ENCODE measurements at regions of chr6 and their contacts with region 1.

Region 1: DNA sequence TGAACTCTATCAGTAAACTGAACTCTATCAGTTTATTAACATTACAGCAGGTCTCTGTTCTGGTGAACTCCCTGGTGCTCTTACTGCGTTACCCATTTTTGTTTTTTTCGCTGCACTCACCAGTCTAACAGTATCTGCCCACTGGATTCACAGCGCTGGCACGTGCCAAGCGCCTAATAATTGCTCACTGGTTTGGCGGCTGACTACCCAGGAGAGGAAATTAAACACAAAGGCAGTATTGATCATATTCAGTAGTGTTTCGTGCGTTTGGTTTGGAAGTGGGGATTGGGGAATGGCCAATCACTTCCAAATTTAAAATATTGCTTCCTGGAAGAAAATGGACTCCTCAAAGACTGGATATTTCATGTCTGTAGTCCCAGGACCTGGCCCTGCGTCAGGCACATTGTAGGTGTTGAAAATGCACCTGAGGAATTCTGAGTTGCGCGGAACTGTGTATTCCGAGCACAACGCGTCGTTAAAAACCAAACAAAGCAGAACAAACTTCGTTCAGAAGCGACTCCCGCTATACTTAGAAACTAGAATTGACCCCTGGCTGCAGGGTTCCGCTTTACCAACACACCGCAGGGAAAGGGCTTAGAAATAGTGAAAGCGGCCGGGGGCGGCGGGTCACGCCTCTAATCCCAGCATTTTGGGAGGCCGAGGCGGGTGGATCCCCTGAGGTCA is 1.1 kb upstream of the RPS12 start:
- DNase-seq: peak in 1 of 2 donors; percentile 74
- H3K4me3 ChIP-seq: peak overlapping the region; percentile 60 to 76
- H3K27ac ChIP-seq: peak overlapping the region; percentile 54 to 56
- H3K4me1 ChIP-seq: peaks cover 10 to 20% of the 10 kb centered on the region in 2 donors
- H3K27me3 ChIP-seq: no peaks in the 10 kb centered on the region
- CTCF ChIP-seq: no peak

Region 2: GRCh38 chr6:132907914-132908313 is 94.6 kb after region 1 on chr6:
- intact Hi-C with region 1: no loop called
- DNase-seq: no peak
- H3K4me3 ChIP-seq: no peak overlapping the region
- H3K27ac ChIP-seq: no peak overlapping the region
- H3K4me1 ChIP-seq: no peaks in the 10 kb centered on the region
- H3K27me3 ChIP-seq: no peaks in the 10 kb centered on the region
- CTCF ChIP-seq: no peak

Region 3: DNA sequence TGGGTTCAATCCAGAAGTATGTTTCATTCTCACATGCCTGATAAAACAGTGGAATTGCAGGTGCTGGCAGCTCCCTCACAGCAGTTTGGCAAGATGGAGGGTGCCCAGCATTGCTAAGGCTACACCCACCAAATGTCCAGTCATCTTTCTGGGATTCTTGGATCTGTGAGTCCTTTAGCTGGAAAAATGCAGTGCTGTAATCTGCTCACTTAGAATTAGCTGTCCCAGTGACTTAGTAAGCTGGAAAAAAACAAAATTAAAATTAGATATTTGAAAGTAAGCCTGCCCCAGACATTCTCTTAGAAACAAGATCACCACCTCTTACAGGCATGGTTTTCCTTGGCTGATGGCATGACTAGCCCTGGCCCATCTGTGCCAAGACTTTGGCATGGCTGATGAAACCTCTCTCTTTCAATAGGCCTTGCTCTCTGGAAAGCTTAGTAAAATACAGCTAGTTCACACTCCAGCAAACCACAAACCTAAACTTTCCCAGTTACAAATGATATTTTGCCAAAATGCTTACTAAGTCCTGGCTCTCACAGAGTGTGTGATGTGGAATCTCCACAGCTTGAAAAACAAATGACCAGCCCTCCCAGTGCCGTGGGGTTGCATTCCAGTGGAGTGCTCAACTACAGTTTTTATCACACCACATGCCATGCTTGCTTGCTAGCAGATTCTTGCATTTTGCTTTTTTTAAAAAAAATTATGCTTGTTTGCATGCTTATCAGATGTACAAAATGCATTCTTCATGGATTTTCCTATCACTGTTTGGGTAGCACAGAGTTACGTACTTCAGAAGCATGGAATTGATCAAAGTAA is 689.3 kb after region 1 on chr6:
- intact Hi-C with region 1: loop called (anchors 5 kb)
- DNase-seq: peak in 1 of 2 donors; percentile 87
- H3K4me3 ChIP-seq: no peak overlapping the region
- H3K27ac ChIP-seq: peak overlapping the region; percentile 71 to 74
- H3K4me1 ChIP-seq: peaks cover 0 to 25% of the 10 kb centered on the region in 2 donors
- H3K27me3 ChIP-seq: no peaks in the 10 kb centered on the region
- CTCF ChIP-seq: no peak